Activated naive CD4-positive, alpha-beta T cell treated with anti-CD3 and anti-CD28 coated beads, Interleukin-2, amount 10 ng/mL, durations not matched to agents 7 days and 5 days (primary cell): ENCODE measurements at regions of chr5 and their contacts with region 1.

Region 1: GRCh38 chr5:55146543-55147151 is 13.3 kb upstream of the GPX8 start:
- DNase-seq: peak; percentile 91
- H3K4me3 Mint-ChIP-seq: no peak overlapping the region
- H3K27ac Mint-ChIP-seq: no peak overlapping the region
- H3K4me1 Mint-ChIP-seq: peaks cover 35% of the 10 kb centered on the region
- H3K27me3 Mint-ChIP-seq: peaks cover 50% of the 10 kb centered on the region

Region 2: GRCh38 chr5:55052383-55052931 is 94.2 kb before region 1 on chr5:
- CTCF ChIA-PET with region 1: no interaction called
- DNase-seq: no peak
- H3K4me3 Mint-ChIP-seq: no peak overlapping the region
- H3K27ac Mint-ChIP-seq: no peak overlapping the region
- H3K4me1 Mint-ChIP-seq: peaks cover 19% of the 10 kb centered on the region
- H3K27me3 Mint-ChIP-seq: no peaks in the 10 kb centered on the region

Region 3: DNA sequence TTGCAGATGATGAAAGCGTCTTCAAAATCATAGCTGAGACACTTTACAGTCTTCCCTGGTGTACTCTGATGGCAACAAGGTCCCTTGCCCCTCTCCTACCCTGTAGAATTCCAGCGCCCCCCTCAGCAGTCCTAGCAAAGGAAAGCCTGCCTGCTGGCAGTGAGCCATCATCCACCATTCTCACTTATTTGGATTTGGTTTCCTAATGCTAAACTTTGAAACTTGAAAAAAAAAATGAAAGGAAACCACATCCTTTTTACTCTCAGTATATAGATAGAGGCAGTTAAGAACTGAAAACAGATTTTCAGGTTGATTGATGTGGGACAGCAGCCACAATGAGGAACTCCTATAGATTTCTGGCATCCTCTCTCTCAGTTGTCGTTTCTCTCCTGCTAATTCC is 44.3 kb before region 1 on chr5 and contains the start of gene GZMA:
- CTCF ChIA-PET with region 1: interaction called, 36 read pairs
- DNase-seq: peak; percentile 70
- H3K4me3 Mint-ChIP-seq: peak within 1 kb of the TSS; percentile 77
- H3K27ac Mint-ChIP-seq: peak within 1 kb of the TSS; percentile 96
- H3K4me1 Mint-ChIP-seq: peaks cover 88% of the 10 kb centered on the region
- H3K27me3 Mint-ChIP-seq: no peaks in the 10 kb centered on the region

Region 4: DNA sequence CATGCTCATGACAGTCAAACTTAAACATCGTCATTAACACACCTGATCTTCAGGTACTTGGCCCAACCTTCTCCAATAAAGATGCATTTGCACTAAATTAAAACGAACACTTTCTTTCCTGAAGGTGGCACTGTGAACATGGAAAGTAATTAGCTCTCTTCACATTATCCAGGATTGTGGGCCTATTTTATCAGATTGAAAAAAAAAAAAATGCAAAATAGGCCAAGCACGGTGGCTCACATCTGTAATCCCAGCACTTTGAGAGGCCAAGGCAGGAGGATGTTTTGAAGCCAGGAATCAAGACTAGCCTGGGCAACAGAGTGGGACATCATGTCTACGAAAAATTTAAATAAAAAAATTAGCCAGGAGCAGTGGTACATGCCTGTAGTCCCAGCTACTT is 40.7 kb after region 1 on chr5:
- CTCF ChIA-PET with region 1: no interaction called
- DNase-seq: no peak
- H3K4me3 Mint-ChIP-seq: no peak overlapping the region
- H3K27ac Mint-ChIP-seq: no peak overlapping the region
- H3K4me1 Mint-ChIP-seq: no peaks in the 10 kb centered on the region
- H3K27me3 Mint-ChIP-seq: peaks cover 52% of the 10 kb centered on the region

Region 5: DNA sequence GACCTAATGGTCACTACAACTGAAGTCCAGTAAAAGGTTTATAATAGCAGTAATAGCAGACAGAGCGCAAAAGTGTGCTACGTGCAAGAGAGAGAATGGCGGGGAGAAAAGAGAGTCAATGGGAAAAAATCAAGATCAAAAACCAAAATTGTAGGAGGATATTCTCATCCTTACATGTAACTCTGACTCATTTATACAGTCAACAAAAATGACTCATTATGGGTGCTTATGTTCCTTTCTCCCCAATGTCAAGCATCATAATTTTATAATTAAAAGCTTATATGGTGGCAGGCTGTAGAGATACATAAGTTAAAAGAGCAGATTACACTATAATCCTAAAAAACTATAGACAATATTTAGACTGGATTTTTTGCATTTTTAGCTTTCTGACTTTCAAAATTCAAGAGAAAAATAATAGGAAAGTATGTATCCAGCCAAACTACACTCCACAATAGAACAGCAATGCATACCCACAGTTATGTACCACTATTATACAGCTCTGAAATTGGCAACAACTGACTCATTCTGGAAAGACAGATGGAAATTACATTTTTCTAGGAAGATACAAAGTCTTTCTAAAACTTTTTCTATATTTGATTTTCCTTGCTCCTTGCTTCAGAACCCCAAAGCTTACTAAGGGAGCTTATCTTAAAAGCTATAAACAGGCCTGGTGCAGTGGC is 309.7 kb after region 1 on chr5:
- CTCF ChIA-PET with region 1: no interaction called
- DNase-seq: no peak
- H3K4me3 Mint-ChIP-seq: no peak overlapping the region
- H3K27ac Mint-ChIP-seq: no peak overlapping the region
- H3K4me1 Mint-ChIP-seq: peaks cover 6% of the 10 kb centered on the region
- H3K27me3 Mint-ChIP-seq: no peaks in the 10 kb centered on the region